KBM-7 (cell line): ENCODE measurements at regions of chr19 and their contacts with region 1.

Region 1: GRCh38 chr19:1122972-1123363 is 19.2 kb downstream of the GPX4 start:
- DNase-seq: peak; percentile 55

Region 2: GRCh38 chr19:1020868-1021425 is 102.0 kb before region 1 on chr19 and contains the start of gene TMEM259:
- in situ Hi-C with region 1: no loop called
- DNase-seq: peak; percentile 97

Region 3: DNA sequence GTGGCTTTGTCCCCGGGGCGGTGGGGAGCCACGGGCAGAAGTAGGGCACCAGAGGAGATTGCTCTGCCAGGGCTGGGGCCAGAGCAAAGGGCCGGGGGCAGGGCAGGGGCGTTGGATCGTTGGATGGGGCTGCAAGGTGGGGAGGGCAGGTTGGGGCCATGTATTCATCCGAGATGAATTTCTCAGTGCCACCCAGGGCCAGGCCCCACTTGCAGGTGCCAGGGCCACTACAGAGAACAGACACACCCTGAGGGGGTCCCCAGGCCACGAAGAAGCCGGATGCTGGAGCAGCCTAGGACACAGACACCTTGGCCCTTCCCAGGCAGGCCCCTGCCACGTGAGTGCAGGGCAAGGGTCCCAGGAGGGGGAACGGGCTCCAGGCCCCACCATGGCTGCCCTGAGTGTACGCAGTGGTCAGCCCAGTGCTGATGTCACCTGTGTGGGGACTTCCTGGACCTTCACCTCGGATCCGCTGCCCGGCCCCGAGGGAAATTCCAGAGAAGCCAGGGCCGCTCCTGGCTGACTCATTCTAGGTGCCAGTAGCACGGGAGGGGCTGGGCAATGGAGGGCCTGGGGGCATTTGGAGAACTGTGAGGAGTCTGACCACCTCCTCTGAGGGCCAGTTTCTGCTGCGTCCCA is 60.7 kb after region 1 on chr19:
- in situ Hi-C with region 1: loop called (anchors 10 kb)
- DNase-seq: no peak

Region 4: GRCh38 chr19:1478934-1479707 is 356.2 kb after region 1 on chr19 and contains the start of gene C19orf25:
- in situ Hi-C with region 1: no loop called
- DNase-seq: peak; percentile 96